Activated naive CD4-positive, alpha-beta T cell treated with anti-CD3 and anti-CD28 coated beads for 36 hours (primary cell): ENCODE measurements at regions of chr6 and their contacts with region 1.

Region 1: DNA sequence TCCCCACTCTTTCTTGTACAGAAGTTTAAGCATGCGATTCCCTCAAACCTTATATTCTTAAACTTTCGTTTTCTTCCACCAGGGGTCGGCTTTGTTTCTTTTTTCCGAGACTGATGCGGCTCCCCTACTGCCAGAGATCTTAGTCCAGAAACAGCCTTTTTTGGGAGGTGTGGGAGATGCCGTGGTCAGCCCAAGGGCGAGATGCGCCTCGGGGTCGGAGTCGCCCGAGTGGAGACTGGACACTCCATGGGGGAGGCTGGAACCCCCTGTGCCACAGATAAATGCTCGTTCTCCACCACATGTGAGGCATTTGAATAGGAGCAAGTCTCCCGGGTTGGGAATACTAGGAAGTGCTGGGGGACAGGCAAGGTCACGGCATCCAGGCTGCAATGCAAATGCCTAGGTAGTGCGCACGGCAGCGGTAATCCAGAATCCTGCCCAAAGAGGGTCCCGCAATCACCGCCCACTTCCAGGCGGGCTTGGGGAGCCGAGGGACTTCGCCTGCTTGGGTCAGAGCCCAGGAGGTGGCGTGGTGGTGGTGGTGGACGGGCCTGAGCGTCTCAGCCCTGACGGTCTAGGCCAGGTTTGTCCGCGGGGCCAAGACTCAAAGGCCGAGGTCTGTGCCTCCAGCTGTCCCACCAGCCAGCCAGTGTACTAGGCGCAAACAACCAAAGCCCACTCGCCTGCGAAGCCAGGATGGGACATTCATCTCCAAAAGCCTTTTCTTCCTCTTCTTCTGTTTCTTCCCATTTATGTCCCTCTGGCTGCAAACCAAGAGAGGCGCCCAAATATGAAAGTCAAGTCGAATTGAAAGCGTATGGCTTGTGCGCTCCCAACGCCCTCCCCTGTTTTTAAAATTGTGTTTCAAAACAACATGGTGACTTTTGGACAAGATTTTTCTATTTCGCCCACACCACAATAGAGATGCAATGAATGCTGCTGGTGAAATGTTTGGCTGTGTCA is 39.3 kb upstream of the OSTM1 start:
- DNase-seq: no peak
- H3K4me3 Mint-ChIP-seq: peak overlapping the region; percentile 72
- H3K27ac Mint-ChIP-seq: no peak overlapping the region
- H3K4me1 Mint-ChIP-seq: peaks cover 40% of the 10 kb centered on the region
- H3K27me3 Mint-ChIP-seq: peaks cover 79% of the 10 kb centered on the region

Region 2: DNA sequence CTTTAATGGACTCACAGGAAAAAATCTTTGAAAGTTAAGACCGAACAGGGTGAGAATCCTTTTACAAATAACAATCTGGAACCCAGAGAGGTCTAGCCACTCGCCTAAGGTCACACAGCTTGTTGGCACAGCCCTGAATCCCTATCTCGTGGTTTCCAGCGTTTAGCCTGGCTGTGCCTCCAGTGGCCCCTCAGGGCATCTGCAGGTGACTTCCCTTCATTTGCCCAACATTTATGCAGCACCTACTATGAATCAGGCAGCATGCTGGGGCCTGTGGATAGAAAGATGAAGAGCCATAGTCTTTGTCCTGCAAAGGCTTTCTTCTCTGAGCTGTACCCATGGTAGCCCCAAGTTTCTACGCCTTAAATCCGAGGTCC is 49.4 kb after region 1 on chr6:
- CTCF ChIA-PET with region 1: interaction called, 3 read pairs
- intact Hi-C with region 1: loop called (anchors 1 kb)
- DNase-seq: no peak
- H3K4me3 Mint-ChIP-seq: no peak overlapping the region
- H3K27ac Mint-ChIP-seq: no peak overlapping the region
- H3K4me1 Mint-ChIP-seq: peaks cover 29% of the 10 kb centered on the region
- H3K27me3 Mint-ChIP-seq: peaks cover 95% of the 10 kb centered on the region

Region 3: GRCh38 chr6:108247954-108248536 is 134.2 kb after region 1 on chr6:
- CTCF ChIA-PET with region 1: no interaction called
- intact Hi-C with region 1: no loop called
- DNase-seq: no peak
- H3K4me3 Mint-ChIP-seq: no peak overlapping the region
- H3K27ac Mint-ChIP-seq: no peak overlapping the region
- H3K4me1 Mint-ChIP-seq: peaks cover 43% of the 10 kb centered on the region
- H3K27me3 Mint-ChIP-seq: no peaks in the 10 kb centered on the region

Region 4: DNA sequence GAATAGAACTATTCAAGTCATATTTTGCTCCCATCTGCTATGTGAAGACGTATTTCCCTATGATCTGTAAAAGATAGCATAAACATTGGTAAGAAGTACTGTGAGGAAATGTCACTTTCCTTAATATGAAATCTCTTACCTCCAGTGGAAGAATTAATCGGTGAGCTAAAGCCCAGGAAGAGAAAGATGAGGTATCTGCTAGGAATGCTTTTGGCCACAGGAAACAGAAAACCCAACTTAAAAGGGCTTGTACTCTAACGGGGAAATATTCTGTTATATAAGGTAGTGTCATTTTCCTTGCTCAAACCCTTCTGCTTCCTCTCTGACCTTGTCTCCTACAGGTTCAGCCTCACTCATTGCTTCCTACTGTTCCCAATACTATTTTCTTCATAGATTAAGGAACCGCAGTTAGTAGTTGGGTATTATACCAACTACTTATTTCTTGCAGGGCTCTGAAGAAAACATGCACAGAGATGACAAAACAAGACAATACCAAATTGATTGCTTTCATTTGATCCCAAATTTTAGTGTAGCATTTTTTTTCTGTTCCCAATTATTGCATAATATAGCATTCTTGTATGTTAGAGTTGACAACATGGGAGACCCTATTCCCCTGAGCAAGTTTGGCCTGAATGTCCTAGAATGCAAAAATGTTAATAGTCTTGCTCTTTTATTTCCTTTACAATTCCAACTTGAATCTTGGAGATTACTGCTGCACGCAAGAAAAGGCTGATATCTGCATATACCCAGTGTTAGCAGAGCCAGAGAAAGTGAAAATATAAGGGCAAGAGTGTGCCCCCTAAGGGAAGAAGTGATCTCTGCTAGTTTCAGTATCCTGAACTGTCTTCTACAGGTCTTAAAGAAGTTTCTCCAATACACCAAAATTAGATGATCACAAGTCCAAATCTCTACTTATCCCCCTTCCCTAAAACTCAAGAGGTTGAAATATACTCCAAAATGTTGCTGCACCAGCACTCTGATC is 246.4 kb after region 1 on chr6:
- CTCF ChIA-PET with region 1: interaction called, 4 read pairs
- intact Hi-C with region 1: loop called (anchors 5 kb)
- DNase-seq: no peak
- H3K4me3 Mint-ChIP-seq: no peak overlapping the region
- H3K27ac Mint-ChIP-seq: no peak overlapping the region
- H3K4me1 Mint-ChIP-seq: peaks cover 3% of the 10 kb centered on the region
- H3K27me3 Mint-ChIP-seq: no peaks in the 10 kb centered on the region

Region 5: GRCh38 chr6:108526739-108527174 is 412.9 kb after region 1 on chr6:
- CTCF ChIA-PET with region 1: interaction called, 4 read pairs
- intact Hi-C with region 1: loop called (anchors 1 kb)
- DNase-seq: no peak
- H3K4me3 Mint-ChIP-seq: no peak overlapping the region
- H3K27ac Mint-ChIP-seq: no peak overlapping the region
- H3K4me1 Mint-ChIP-seq: no peaks in the 10 kb centered on the region
- H3K27me3 Mint-ChIP-seq: no peaks in the 10 kb centered on the region

Region 6: DNA sequence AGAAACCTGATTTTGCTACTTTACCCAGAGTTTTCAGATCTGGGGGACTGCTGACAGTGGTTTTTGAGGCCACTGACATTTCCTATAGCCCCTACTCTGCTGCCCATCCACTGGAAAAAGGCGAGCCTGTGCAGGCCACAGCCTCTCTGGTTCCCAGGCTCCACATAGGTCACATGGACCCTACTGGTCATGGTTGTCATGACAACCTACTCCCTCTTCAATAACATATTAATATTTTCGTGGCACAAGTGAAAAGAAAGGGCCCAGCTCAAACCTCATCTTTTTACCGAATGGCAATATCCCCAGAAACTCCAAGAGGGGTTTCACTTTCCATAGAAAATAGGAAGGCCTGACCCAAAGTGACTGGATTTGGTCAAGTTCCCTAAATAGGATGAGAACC is 435.9 kb after region 1 on chr6:
- CTCF ChIA-PET with region 1: no interaction called
- intact Hi-C with region 1: no loop called
- DNase-seq: no peak
- H3K4me3 Mint-ChIP-seq: no peak overlapping the region
- H3K27ac Mint-ChIP-seq: no peak overlapping the region
- H3K4me1 Mint-ChIP-seq: peaks cover 3% of the 10 kb centered on the region
- H3K27me3 Mint-ChIP-seq: no peaks in the 10 kb centered on the region